ENCODE measurements at regions of chr5 and their contacts with region 1.

Region 1: GRCh38 chr5:122111460-122111859 is 17.9 kb upstream of the ZNF474 start:
- DNase-seq: peak in 1 of 4 experiments; percentile 18
- ATAC-seq: no peak
- H3K4me3 ChIP-seq: no peak overlapping the region
- H3K27ac ChIP-seq: peak overlapping the region; percentile 98; the same call in 2 of the 3 replicates
- H3K4me1 ChIP-seq: peaks cover 5 to 34% of the 10 kb centered on the region in 2 experiments; a peak in 4 of 5 replicates
- H3K27me3 ChIP-seq: no peaks in the 10 kb centered on the region
- CTCF ChIP-seq: no peak
- EP300 ChIP-seq: no peak
- POLR2A ChIP-seq: no peak
- RAD21 ChIP-seq: no peak

Region 2: DNA sequence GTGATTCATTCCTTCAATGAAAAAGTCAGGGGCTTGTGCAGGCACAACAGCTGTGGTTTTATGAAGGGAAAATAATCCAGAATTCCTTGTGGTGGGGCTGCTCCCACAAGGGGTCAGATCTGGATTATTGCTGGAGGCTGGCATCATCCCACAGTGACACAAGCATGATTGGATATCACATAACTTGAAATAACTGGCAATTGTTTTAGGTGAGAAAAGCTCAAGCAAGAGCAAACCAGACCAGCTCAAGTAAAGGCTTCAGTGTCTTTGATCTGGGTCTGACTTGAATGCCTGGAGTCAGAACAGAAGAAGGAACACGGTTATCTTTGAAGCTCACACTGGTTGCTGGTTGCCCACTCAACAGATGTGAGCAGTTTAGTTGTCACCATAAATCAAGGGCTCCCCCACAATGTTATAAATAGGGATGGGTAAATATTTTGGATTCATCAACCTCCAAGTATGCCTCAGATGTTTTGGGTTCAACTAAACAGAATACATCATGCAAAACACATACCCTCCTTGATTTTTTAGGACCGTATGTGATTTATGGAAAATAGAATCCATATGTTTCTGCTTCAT is 14.8 kb after region 1 on chr5:
- CTCF ChIA-PET with region 1: no interaction called
- POLR2A ChIA-PET with region 1: interaction called, 28 read pairs
- in situ Hi-C with region 1: no loop called
- intact Hi-C with region 1: loop called (anchors 1 kb)
- DNase-seq: peak; percentile 41 to 93 (median 66)
- ATAC-seq: peak; percentile 86
- H3K4me3 ChIP-seq: no peak overlapping the region
- H3K27ac ChIP-seq: peak overlapping the region; percentile 76
- H3K4me1 ChIP-seq: peaks cover 7 to 52% of the 10 kb centered on the region in 2 experiments; a peak in 3 of 5 replicates
- H3K27me3 ChIP-seq: no peaks in the 10 kb centered on the region
- CTCF ChIP-seq: no peak
- EP300 ChIP-seq: peak; percentile 91
- POLR2A ChIP-seq: no peak
- RAD21 ChIP-seq: 0 out of 4 replicates have a peak, but pooled peaks of 1 of the 2 experiments have one; percentile 8

Region 3: DNA sequence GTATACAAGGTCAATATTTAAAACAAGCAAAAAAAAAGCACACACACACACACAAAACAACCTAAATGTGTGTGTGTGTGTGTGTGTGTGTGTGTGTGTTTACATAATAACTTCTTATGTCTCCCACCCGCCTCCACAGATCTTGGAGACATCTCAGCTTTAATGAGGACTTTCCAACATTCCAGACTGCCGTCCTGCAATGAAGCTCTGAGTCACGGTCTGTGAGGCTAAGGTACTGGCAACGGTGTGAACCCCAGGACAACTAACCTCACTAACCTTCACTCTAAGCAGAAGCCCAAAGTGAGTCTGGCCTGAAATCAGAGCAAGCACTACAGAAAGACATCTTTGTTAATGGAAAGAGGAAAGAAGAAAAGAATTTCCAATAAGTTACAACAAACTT is 40.2 kb after region 1 on chr5:
- CTCF ChIA-PET with region 1: no interaction called
- POLR2A ChIA-PET with region 1: no interaction called
- in situ Hi-C with region 1: loop called (anchors 5 kb)
- intact Hi-C with region 1: loop called (anchors 1 kb)
- DNase-seq: no peak
- ATAC-seq: no peak
- H3K4me3 ChIP-seq: no peak overlapping the region
- H3K27ac ChIP-seq: no peak overlapping the region
- H3K4me1 ChIP-seq: peaks cover 4 to 14% of the 10 kb centered on the region in 2 experiments; a peak in 3 of 5 replicates
- H3K27me3 ChIP-seq: no peaks in the 10 kb centered on the region
- CTCF ChIP-seq: no peak
- EP300 ChIP-seq: no peak
- POLR2A ChIP-seq: no peak
- RAD21 ChIP-seq: no peak

Region 4: GRCh38 chr5:122668552-122668951 is 557.1 kb after region 1 on chr5:
- CTCF ChIA-PET with region 1: no interaction called
- POLR2A ChIA-PET with region 1: no interaction called
- in situ Hi-C with region 1: no loop called
- intact Hi-C with region 1: no loop called
- DNase-seq: no peak
- ATAC-seq: no peak
- H3K4me3 ChIP-seq: no peak overlapping the region
- H3K27ac ChIP-seq: no peak overlapping the region
- H3K4me1 ChIP-seq: no peaks in the 10 kb centered on the region
- H3K27me3 ChIP-seq: peaks cover 0 to 4% of the 10 kb centered on the region in 2 experiments; a peak in 2 of 5 replicates
- CTCF ChIP-seq: no peak
- EP300 ChIP-seq: no peak
- POLR2A ChIP-seq: no peak
- RAD21 ChIP-seq: no peak

Measured in K562 (cell line).